Right ventricle myocardium inferior (tissue), 1 donor: ENCODE measurements at regions of chr3 and their contacts with region 1.

Region 1: GRCh38 chr3:178900029-178900646 is 171.5 kb downstream of the ZMAT3 start:
- DNase-seq: no peak
- ATAC-seq: no peak

Region 2: DNA sequence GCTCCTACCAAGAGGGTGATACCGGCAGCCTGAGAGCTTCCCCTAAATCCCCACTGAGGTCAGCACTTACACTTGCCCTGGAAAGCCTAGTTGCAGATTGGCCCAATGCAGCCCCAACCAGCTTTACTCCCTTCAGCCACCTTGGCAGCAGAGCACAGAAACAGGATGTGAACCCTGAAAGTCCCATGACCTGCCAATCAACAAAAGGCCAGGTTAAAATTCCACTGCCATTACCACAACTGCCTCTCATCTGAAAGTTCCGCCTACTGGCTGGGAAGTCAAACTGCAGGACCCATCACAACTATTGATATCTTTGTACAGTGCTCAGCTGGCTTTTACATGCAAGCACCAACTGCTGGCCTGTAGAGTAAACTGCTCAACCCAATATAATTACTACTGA is 15.2 kb after region 1 on chr3:
- intact Hi-C with region 1: loop called (anchors 2 kb)
- DNase-seq: no peak
- ATAC-seq: no peak

Region 3: GRCh38 chr3:179005706-179006105 is 105.6 kb after region 1 on chr3:
- intact Hi-C with region 1: no loop called
- DNase-seq: no peak
- ATAC-seq: no peak

Region 4: GRCh38 chr3:179071550-179072397 is 171.6 kb after region 1 on chr3 and contains the start of gene ZMAT3:
- intact Hi-C with region 1: no loop called
- DNase-seq: peak; percentile 94
- ATAC-seq: peak; percentile 99
- total RNA-seq, gene ZMAT3: 11.1 TPM